Right ventricle myocardium superior (tissue), 1 donor: ENCODE measurements at regions of chr12 and their contacts with region 1.

Region 1: DNA sequence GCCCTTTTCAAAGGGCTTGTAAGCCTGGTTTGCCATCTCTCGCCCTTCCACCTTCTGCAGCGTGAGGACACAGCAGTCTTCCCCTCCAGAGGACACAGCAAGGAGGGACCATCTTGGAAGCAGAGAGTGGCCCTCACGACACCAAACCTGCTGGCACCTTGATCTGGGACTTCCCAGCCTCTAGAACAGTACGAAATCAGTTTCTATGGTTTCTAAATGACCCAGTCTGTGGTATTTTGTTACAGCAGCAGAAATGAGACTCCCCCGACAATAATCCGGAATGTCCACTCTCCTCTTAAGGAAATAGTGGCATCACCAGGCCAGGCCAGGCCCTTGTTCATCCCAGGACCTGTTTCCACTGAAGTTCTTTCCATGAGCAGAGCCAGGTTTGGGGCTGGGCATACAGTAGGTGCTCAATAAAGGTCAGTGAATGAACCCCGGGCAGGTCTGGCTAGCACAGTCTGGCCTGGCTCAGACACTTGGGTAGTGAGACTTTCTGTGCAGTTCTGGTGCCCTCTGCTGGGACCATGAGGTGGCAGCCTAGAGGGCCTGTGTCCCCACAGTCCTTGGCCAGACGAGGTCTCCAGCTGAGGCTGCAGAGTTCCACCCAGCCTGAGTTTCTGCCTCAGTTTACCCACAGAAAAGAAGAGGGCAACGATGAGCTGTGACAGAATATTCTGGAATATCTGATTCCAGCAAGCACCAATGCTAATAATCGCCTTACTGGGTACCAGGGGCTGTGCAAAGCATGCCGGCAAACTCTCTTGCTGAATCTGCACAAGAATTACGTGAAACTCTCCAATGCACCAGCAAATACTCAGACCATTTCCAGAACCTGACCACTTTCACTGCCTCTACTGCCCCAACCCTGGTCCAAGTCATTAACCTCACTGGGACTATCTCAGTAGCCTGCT is 14.0 kb downstream of the ABCB9 start:
- DNase-seq: peak; percentile 84
- ATAC-seq: peak; percentile 97

Region 2: GRCh38 chr12:122793685-122794106 is 158.5 kb before region 1 on chr12:
- intact Hi-C with region 1: loop called (anchors 2 kb)
- DNase-seq: no peak
- ATAC-seq: peak; percentile 73

Region 3: DNA sequence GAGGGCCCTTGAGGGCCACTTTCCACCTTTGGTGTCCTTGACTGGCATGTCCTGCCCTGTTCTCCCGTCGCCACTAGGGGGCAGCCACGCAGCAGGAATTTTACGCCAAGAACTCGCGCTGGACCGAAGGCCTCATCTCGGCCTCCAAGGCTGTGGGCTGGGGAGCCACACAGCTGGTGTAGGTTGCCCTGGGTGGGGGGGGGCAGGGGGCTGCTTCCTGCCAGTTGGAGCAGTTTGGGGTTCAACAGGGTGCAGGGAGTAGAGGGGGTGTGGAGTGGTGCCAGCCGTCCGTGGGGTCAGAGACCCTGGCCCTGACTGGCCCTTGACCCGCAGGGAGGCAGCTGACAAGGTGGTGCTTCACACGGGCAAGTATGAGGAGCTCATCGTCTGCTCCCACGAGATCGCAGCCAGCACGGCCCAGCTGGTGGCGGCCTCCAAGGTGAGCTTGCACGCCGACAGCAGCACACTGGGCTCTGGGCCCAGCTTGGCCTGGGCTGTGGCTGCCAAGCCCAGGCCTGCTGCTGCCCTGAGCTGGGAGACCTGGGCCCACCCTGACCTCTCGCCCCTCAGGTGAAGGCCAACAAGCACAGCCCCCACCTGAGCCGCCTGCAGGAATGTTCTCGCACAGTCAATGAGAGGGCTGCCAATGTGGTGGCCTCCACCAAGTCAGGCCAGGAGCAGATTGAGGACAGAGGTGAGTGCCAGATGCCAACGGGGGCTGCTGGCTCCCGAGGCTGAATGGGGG is 91.7 kb before region 1 on chr12:
- intact Hi-C with region 1: loop called (anchors 1 kb)
- DNase-seq: peak; percentile 91
- ATAC-seq: peak; percentile 79

Region 4: GRCh38 chr12:123250484-123251383 is 298.5 kb after region 1 on chr12:
- intact Hi-C with region 1: no loop called
- DNase-seq: no peak
- ATAC-seq: no peak